ENCODE measurements at regions of chr19 and their contacts with region 1.

Region 1: GRCh38 chr19:13104360-13104847 is 1.7 kb upstream of the LYL1 start:
- DNase-seq: peak; percentile 72
- ATAC-seq: peak; percentile 38
- H3K4me3 Mint-ChIP-seq: peak overlapping the region; percentile 78
- H3K27ac Mint-ChIP-seq: peak overlapping the region; percentile 83
- H3K4me1 Mint-ChIP-seq: peaks cover 30% of the 10 kb centered on the region
- H3K27me3 Mint-ChIP-seq: peaks cover 5% of the 10 kb centered on the region

Region 2: DNA sequence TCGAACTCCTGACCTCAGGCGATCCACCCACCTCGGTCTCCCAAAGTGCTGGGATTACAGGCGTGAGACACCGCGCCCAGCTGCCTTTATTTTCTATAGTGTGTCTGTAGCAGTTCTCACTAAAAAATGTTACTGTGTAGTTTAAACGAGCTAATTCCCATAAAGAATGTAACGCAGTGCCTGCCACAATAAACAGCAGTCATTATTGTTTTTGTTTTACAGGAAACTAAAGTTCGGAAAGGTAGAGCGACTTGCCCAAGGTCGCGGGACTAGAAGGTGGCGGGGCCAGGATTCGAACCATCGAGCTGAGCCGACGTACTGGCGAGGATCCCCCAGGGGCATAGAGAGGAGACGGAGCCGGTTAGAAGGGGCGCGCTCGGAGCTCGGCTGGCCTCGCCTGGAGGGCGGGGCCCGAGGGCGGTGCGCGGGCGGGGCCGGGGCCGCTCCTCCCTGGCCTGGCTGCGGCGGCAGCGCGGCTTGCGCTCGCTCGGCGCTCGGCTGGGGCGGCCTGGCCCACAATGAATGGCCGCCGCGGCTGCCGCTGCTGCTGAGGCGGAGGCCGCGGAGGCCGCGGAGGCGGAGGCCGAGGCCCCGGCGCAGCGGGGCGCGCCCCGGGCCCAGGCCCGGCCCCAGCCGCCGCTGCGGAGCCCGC is 13.5 kb after region 1 on chr19 and contains the start of gene NACC1:
- CTCF ChIA-PET with region 1: interaction called, 32 read pairs
- DNase-seq: peak; percentile 93
- ATAC-seq: peak; percentile 88
- H3K4me3 Mint-ChIP-seq: peak within 1 kb of the TSS; percentile 93
- H3K27ac Mint-ChIP-seq: peak within 1 kb of the TSS; percentile 96
- H3K4me1 Mint-ChIP-seq: peaks cover 56% of the 10 kb centered on the region
- H3K27me3 Mint-ChIP-seq: no peaks in the 10 kb centered on the region
- total RNA-seq, gene NACC1: 82.2 to 96.0 TPM

Region 3: GRCh38 chr19:13132471-13133180 is 28.2 kb after region 1 on chr19:
- CTCF ChIA-PET with region 1: interaction called, 13 read pairs
- DNase-seq: peak; percentile 84
- ATAC-seq: peak; percentile 95
- H3K4me3 Mint-ChIP-seq: peak overlapping the region; percentile 18
- H3K27ac Mint-ChIP-seq: peak overlapping the region; percentile 77
- H3K4me1 Mint-ChIP-seq: peaks cover 29% of the 10 kb centered on the region
- H3K27me3 Mint-ChIP-seq: no peaks in the 10 kb centered on the region